ENCODE measurements at regions of chr3 and their contacts with region 1.

Region 1: GRCh38 chr3:127307112-127307835 is 19.4 kb upstream of the PRR20G start:
- DNase-seq: peak; percentile 19
- ATAC-seq: peak; percentile 86
- H3K4me3 ChIP-seq: no peak overlapping the region
- H3K27ac ChIP-seq: no peak overlapping the region
- H3K4me1 ChIP-seq: no peaks in the 10 kb centered on the region; the same call in 1 of the 2 replicates
- H3K27me3 ChIP-seq: no peaks in the 10 kb centered on the region
- CTCF ChIP-seq: no peak
- EP300 ChIP-seq: 0 out of 4 replicates have a peak, but pooled peaks of 1 of the 2 experiments have one; percentile 32
- POLR2A ChIP-seq: no peak
- RAD21 ChIP-seq: no peak

Region 2: DNA sequence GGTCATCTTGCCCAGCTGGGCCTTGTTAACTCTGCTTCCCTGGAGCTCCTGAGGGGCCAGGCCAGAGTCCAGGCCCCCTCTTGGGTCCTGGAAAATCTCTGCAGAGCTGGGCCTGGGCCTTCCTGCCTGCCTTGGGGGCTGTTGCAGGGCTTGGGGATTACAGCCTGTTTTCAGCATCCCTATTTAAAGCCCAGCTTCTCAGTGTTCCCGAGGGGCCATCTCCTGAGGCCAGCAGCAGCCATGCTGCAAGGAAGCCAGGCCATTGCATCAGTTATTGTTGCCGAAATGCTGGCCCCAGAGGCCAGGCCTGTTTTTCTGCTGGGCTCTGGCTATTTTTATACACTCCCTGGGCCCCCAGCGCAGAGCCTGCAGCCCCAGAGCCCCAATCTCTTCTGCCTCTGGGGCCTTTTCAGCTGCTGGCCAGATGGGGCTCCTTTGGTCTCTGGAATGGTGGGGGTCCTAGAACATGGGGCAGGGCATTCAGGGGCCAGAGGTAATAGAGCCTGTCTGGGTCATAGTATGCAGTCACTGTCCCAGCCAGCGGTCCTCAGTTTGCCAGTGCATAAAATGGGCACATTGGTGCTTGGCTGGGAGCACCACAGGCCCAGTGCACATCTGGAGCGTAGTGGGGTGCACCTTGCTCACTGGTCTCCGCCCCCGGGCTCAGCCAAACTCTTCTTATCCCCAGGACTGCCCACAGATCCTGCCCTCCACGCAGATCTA is 295.8 kb before region 1 on chr3:
- CTCF ChIA-PET with region 1: no interaction called
- POLR2A ChIA-PET with region 1: no interaction called
- RAD21 ChIA-PET with region 1: no interaction called
- SMC1A ChIA-PET with region 1: no interaction called
- in situ Hi-C with region 1: no loop called
- intact Hi-C with region 1: no loop called
- DNase-seq: no peak
- ATAC-seq: no peak
- H3K4me3 ChIP-seq: no peak overlapping the region
- H3K27ac ChIP-seq: no peak overlapping the region
- H3K4me1 ChIP-seq: peaks cover 16% of the 10 kb centered on the region
- H3K27me3 ChIP-seq: no peaks in the 10 kb centered on the region
- CTCF ChIP-seq: no peak
- EP300 ChIP-seq: no peak
- POLR2A ChIP-seq: no peak
- RAD21 ChIP-seq: no peak

Region 3: DNA sequence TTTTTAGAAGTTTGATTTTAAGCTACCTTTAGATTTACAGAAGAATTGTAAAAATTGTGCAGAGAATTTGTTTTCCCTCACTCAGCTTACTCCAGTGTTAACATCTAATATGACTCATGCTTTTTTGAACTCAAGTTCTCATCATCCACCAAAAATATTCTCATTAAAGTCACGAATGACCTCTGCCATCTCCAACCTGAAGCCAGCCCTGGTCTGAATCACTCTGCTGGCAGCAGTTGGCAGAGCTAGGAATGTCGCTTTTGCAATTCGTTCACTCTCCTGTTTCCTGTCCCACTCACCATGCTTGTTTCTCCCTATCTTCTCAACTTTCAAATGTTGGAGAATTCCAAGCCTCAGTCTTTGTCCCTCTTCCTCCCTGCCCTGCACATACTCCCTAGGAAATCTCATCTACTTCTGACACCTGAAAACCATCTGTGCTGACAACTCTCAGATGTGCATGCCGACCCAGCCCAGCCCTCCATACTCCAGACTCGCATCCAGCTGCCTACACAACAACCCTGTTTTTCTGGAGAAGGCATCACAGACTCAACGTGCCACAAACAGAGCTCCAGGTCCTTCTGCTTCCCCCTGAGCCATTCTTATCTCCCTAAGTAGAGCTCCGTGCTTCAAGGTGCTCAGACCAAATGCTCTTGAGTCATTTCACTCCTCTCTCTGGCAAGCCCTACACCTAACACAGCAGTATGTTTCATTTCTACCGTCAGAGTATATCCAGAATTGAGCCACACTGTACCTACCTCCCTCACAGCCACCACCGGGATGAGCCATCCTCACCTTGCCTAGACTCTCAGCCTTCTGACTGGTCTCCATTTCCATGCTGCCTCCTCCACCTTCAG is 89.4 kb before region 1 on chr3:
- CTCF ChIA-PET with region 1: interaction called, 4 read pairs
- POLR2A ChIA-PET with region 1: interaction called, 11 read pairs
- RAD21 ChIA-PET with region 1: interaction called, 6 read pairs
- SMC1A ChIA-PET with region 1: interaction called, 9 read pairs
- in situ Hi-C with region 1: no loop called
- intact Hi-C with region 1: no loop called
- DNase-seq: no peak
- ATAC-seq: peak; percentile 61
- H3K4me3 ChIP-seq: no peak overlapping the region
- H3K27ac ChIP-seq: no peak overlapping the region
- H3K4me1 ChIP-seq: peaks cover 16% of the 10 kb centered on the region
- H3K27me3 ChIP-seq: no peaks in the 10 kb centered on the region; a peak in 1 of 4 replicates
- CTCF ChIP-seq: no peak
- EP300 ChIP-seq: no peak
- POLR2A ChIP-seq: peak; percentile 57
- RAD21 ChIP-seq: no peak

Region 4: GRCh38 chr3:127296959-127297358 is 10.3 kb before region 1 on chr3:
- CTCF ChIA-PET with region 1: interaction called, 5 read pairs
- POLR2A ChIA-PET with region 1: no interaction called
- RAD21 ChIA-PET with region 1: interaction called, 3 read pairs
- SMC1A ChIA-PET with region 1: interaction called, 10 read pairs
- in situ Hi-C with region 1: no loop called
- intact Hi-C with region 1: no loop called
- DNase-seq: no peak
- ATAC-seq: no peak
- H3K4me3 ChIP-seq: no peak overlapping the region
- H3K27ac ChIP-seq: no peak overlapping the region
- H3K4me1 ChIP-seq: no peaks in the 10 kb centered on the region
- H3K27me3 ChIP-seq: no peaks in the 10 kb centered on the region
- CTCF ChIP-seq: no peak
- EP300 ChIP-seq: no peak
- POLR2A ChIP-seq: no peak
- RAD21 ChIP-seq: no peak

Region 5: DNA sequence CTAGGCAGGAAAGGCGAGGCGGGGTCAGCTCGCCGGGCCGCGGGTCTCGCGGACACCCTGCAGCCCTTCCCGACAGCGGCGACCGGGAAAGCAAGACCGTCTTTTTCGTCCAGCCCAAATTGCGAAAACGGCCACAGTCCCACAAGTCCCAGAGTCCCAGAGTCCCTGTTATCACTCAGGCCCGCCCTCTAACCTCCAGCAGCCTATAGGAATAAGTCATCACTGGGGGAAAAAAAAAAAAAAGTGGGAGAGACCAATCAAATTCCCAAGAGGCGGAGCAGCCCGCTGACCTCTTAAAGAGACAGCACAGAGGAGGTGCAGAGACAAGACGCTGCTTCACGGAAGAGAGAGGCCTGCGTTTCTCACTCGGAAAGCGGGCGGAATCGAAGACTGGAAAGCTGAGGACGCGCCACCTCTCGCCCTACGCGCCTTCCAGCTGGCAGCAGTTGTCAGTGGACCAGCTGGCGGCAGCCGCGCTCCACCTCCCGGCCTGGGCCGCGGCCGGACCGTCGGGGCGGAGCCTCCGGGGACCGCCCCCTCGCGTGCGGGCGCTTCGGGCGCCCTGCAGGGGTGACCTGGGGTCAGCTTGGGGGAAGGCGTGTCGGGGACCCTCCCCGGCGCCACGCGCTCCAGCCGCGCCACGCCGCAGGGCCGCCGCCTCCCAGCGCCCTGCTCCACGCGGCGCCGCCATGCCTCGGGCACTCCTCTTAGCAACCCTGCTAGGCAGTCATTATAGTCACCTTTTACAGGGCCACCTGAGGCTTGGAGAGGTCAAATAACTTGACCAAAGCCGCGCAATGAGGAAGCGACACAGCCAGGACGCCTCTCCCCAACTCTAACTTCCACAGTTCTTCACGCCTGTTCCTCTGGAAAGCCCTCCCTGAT is 283.6 kb after region 1 on chr3 and contains the start of gene TPRA1:
- CTCF ChIA-PET with region 1: no interaction called
- POLR2A ChIA-PET with region 1: no interaction called
- RAD21 ChIA-PET with region 1: no interaction called
- SMC1A ChIA-PET with region 1: no interaction called
- in situ Hi-C with region 1: no loop called
- intact Hi-C with region 1: no loop called
- DNase-seq: peak; percentile 90
- ATAC-seq: peak; percentile 84
- H3K4me3 ChIP-seq: peak within 1 kb of the TSS; percentile 99
- H3K27ac ChIP-seq: peak within 1 kb of the TSS; percentile 94
- H3K4me1 ChIP-seq: peaks cover 22% of the 10 kb centered on the region
- H3K27me3 ChIP-seq: no peaks in the 10 kb centered on the region
- CTCF ChIP-seq: peak; percentile 26 to 72 (median 42); a peak in 5 of 6 replicates
- EP300 ChIP-seq: no peak
- POLR2A ChIP-seq: peak; percentile 58; the same call in 1 of the 2 replicates
- RAD21 ChIP-seq: peak; percentile 33
- polyA plus RNA-seq, gene TPRA1: 1.8 to 3.6 TPM

Region 6: DNA sequence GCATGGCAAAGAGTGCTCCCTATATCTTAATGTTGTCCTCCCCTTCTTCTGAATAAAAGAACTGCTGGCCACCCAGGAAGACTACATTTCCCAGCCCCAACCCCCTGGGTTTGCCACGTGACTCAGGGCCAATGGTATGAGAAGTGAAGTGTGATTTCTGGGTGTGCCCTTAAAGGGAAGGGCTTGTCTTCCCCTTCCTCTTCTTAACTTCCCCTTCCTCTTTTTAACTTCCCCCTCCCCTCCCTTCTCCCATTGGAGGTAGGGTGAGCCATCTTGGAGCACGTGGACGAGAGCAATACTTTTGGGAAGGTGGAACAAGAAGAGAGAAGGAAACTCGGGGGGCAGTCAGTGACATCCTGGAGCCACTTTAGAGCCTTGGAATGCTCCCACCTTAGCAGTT is 600.9 kb after region 1 on chr3:
- CTCF ChIA-PET with region 1: no interaction called
- POLR2A ChIA-PET with region 1: no interaction called
- RAD21 ChIA-PET with region 1: no interaction called
- SMC1A ChIA-PET with region 1: no interaction called
- in situ Hi-C with region 1: no loop called
- intact Hi-C with region 1: no loop called
- DNase-seq: no peak
- ATAC-seq: no peak
- H3K4me3 ChIP-seq: no peak overlapping the region
- H3K27ac ChIP-seq: no peak overlapping the region
- H3K4me1 ChIP-seq: no peaks in the 10 kb centered on the region
- H3K27me3 ChIP-seq: no peaks in the 10 kb centered on the region
- CTCF ChIP-seq: no peak
- EP300 ChIP-seq: no peak
- POLR2A ChIP-seq: no peak
- RAD21 ChIP-seq: no peak

Measured in GM12878 (cell line).